PC-9 (cell line): ENCODE measurements at regions of chr3 and their contacts with region 1.

Region 1: GRCh38 chr3:112734718-112735350 is 93.9 kb upstream of the CCDC80 start:
- DNase-seq: peak; percentile 44 to 63
- H3K4me3 ChIP-seq: no peak overlapping the region
- H3K27ac ChIP-seq: no peak overlapping the region
- H3K4me1 ChIP-seq: peaks cover 58% of the 10 kb centered on the region
- H3K27me3 ChIP-seq: no peaks in the 10 kb centered on the region
- CTCF ChIP-seq: peak; percentile 86

Region 2: DNA sequence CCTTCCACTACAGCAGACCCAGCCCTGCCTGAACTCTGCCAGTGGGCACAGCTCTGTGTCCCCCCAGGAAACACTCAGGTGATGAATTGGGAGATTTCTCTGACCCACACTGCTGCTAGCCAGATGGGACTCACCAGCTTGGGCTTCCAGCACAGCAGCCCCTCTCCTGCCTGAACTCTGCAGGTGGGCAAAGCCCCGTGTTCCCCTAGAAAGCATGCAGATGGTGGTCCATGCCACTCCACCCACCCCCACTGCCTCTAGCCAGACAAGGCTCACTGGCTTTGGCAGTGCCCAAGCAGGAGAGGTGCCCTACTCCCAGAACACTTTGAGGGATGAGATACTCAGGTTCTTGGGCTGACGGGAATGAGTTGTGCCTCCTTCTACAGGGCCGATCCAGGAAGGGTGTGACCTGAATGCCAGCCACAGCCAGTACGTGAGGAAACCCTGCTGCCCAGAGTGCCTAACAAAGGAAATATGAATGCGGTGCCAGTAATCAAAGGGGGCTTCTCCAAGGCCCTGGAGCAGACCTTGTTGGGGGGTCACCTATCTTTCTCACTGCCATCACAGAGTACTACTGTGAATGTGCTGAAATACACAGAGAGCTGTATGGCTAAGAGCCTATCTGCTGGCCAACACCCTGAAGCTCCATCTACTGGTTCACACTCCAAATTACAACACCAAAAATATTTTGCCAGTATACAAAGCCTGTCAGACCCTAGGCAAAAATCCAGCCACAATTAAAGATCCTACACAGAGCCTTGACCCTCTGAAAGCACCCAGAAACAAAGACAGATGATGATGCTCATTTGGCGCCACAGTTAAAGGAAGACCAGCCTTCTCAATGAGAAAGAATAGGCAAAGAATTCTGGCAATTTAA is 297.4 kb before region 1 on chr3:
- CTCF ChIA-PET with region 1: no interaction called
- POLR2A ChIA-PET with region 1: no interaction called
- intact Hi-C with region 1: no loop called
- DNase-seq: no peak
- H3K4me3 ChIP-seq: no peak overlapping the region
- H3K27ac ChIP-seq: no peak overlapping the region
- H3K4me1 ChIP-seq: no peaks in the 10 kb centered on the region
- H3K27me3 ChIP-seq: no peaks in the 10 kb centered on the region
- CTCF ChIP-seq: peak; percentile 53; the same call in 1 of the 2 replicates

Region 3: DNA sequence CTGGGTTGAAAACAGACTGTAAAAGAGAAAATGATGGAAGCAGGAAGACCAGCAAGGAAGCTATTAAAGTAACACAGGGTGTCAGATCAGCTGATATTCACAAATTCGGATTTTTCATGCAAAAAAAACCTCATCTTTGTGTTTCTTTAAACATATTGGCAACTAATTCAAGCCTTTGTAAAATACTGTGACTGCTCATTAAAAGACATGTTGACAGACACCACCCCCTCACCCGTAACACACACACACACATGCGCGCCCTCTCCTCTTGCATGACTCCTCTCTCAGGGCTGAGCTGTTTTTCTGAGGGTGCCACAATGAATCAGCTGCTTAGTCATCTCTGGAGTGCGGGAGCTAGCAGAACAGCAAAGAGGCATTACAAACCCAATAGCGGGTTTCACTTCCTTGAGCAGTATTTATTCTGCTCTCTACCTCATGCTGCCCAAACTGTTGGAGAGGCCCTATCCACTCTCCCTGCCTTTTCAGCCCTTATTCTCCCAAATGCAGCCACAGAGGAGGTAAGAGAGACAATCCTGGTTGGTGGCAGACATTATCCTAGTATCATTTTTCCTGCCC is 58.1 kb before region 1 on chr3:
- CTCF ChIA-PET with region 1: no interaction called
- POLR2A ChIA-PET with region 1: no interaction called
- intact Hi-C with region 1: loop called (anchors 1 kb)
- DNase-seq: peak; percentile 53 to 86
- H3K4me3 ChIP-seq: no peak overlapping the region
- H3K27ac ChIP-seq: peak overlapping the region; percentile 87
- H3K4me1 ChIP-seq: peaks cover 57% of the 10 kb centered on the region
- H3K27me3 ChIP-seq: no peaks in the 10 kb centered on the region
- CTCF ChIP-seq: no peak

Region 4: GRCh38 chr3:112779558-112780480 is 45.0 kb after region 1 on chr3:
- CTCF ChIA-PET with region 1: interaction called, 10 read pairs
- POLR2A ChIA-PET with region 1: interaction called, 6 read pairs
- intact Hi-C with region 1: no loop called
- DNase-seq: peak in 1 of 2 experiments; percentile 55
- H3K4me3 ChIP-seq: no peak overlapping the region
- H3K27ac ChIP-seq: peak overlapping the region; percentile 93
- H3K4me1 ChIP-seq: peaks cover 65% of the 10 kb centered on the region
- H3K27me3 ChIP-seq: no peaks in the 10 kb centered on the region
- CTCF ChIP-seq: no peak

Region 5: GRCh38 chr3:112979240-112979832 is 244.5 kb after region 1 on chr3:
- CTCF ChIA-PET with region 1: interaction called, 10 read pairs
- POLR2A ChIA-PET with region 1: no interaction called
- intact Hi-C with region 1: loop called (anchors 1 kb)
- DNase-seq: no peak
- H3K4me3 ChIP-seq: no peak overlapping the region
- H3K27ac ChIP-seq: no peak overlapping the region
- H3K4me1 ChIP-seq: peaks cover 2% of the 10 kb centered on the region
- H3K27me3 ChIP-seq: no peaks in the 10 kb centered on the region
- CTCF ChIP-seq: peak; percentile 87

Region 6: GRCh38 chr3:112990672-112991602 is 256.1 kb after region 1 on chr3 and contains the start of gene GTPBP8:
- CTCF ChIA-PET with region 1: interaction called, 4 read pairs
- POLR2A ChIA-PET with region 1: interaction called, 3 read pairs
- intact Hi-C with region 1: loop called (anchors 2 kb)
- DNase-seq: peak; percentile 87 to 90
- H3K4me3 ChIP-seq: peak within 1 kb of the TSS; percentile 95
- H3K27ac ChIP-seq: peak within 1 kb of the TSS; percentile 98
- H3K4me1 ChIP-seq: peaks cover 29% of the 10 kb centered on the region
- H3K27me3 ChIP-seq: no peaks in the 10 kb centered on the region
- CTCF ChIP-seq: peak; percentile 25; the same call in 1 of the 2 replicates
- total RNA-seq, gene GTPBP8: 27.9 and 34.3 TPM in 2 replicates